B cell (primary cell): ENCODE measurements at regions of chr2 and their contacts with region 1.

Region 1: GRCh38 chr2:174487108-174487819 is 435 bp upstream of the GPR155 start:
- DNase-seq: peak; percentile 95
- ATAC-seq: peak; percentile 93
- H3K4me3 ChIP-seq: peak overlapping the region; percentile 81 to 90 (median 87)
- H3K4me3 Mint-ChIP-seq: peak overlapping the region; percentile 98
- H3K27ac ChIP-seq: peak overlapping the region; percentile 74 to 75
- H3K27ac Mint-ChIP-seq: peak overlapping the region; percentile 88
- H3K4me1 ChIP-seq: peaks cover 17 to 27% of the 10 kb centered on the region in 2 donors
- H3K4me1 Mint-ChIP-seq: peaks cover 44% of the 10 kb centered on the region
- H3K27me3 ChIP-seq: no peaks in the 10 kb centered on the region
- H3K27me3 Mint-ChIP-seq: no peaks in the 10 kb centered on the region
- CTCF ChIP-seq: no peak

Region 2: DNA sequence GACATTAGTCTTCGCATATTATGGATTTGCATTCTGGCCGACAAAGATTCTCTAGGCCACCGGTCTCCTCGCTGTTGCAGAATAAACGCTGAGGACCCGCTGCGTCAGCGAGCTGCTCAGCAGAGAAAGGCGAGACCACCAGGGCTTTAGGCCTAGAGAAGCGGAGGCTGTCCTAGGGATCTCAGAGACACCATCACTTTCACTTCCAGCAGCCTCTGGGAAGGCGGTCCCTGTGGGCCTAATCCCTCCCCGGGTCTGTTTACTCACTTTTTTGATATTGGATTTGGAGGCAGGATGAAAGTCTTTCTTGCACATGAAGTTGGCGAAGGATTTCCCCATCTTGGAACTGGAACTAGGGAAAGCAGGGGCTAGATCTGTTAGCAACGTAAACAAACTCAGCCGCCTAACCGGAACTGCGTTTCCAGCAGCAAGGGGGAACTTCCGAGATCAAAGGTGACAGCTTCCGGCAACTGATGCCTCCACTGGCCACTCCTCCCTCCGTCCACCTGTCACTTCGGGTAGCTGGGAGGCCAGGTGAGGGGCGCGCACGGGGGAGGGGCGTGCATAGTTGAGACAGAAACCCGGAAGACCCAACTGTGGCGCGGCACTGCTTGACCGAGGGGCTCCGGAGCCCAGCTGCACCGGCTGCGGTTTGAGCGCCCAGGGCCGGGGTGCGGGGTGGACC is 91.8 kb before region 1 on chr2 and contains the start of gene SCRN3:
- CTCF ChIA-PET with region 1: no interaction called
- POLR2A ChIA-PET with region 1: interaction called, 6 read pairs
- intact Hi-C with region 1: loop called (anchors 2 kb)
- DNase-seq: peak; percentile 87
- ATAC-seq: peak; percentile 94
- H3K4me3 ChIP-seq: peak within 1 kb of the TSS; percentile 81 to 97 (median 90)
- H3K4me3 Mint-ChIP-seq: peak within 1 kb of the TSS; percentile 99
- H3K27ac ChIP-seq: peak within 1 kb of the TSS; percentile 88 to 94
- H3K27ac Mint-ChIP-seq: peak within 1 kb of the TSS; percentile 99
- H3K4me1 ChIP-seq: peaks cover 14 to 24% of the 10 kb centered on the region in 2 donors
- H3K4me1 Mint-ChIP-seq: peaks cover 39% of the 10 kb centered on the region
- H3K27me3 ChIP-seq: no peaks in the 10 kb centered on the region
- H3K27me3 Mint-ChIP-seq: no peaks in the 10 kb centered on the region
- CTCF ChIP-seq: no peak
- total RNA-seq, gene SCRN3: 16.9 and 21.6 TPM in 2 replicates

Region 3: DNA sequence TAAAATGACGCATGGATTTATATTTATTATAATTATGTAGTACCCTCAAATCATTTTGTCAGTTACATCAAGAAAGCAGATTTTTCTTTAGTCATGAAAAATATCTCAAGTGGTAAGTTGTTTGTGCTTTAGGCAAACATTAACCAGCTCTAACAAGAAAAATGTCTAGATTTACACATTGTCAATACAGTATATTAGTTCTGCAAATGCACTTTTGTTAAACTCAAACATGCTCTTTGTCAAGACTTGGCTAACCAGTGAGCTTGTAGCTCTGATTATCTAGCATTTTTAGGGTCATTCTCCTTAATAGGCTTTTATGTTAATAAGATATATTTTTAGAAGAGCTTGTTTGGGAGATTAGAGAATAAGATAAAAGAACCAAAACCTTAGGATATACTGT is 59.0 kb before region 1 on chr2:
- CTCF ChIA-PET with region 1: no interaction called
- POLR2A ChIA-PET with region 1: no interaction called
- intact Hi-C with region 1: no loop called
- DNase-seq: no peak
- ATAC-seq: no peak
- H3K4me3 ChIP-seq: no peak overlapping the region
- H3K4me3 Mint-ChIP-seq: no peak overlapping the region
- H3K27ac ChIP-seq: no peak overlapping the region
- H3K27ac Mint-ChIP-seq: no peak overlapping the region
- H3K4me1 ChIP-seq: no peaks in the 10 kb centered on the region
- H3K4me1 Mint-ChIP-seq: no peaks in the 10 kb centered on the region
- H3K27me3 ChIP-seq: no peaks in the 10 kb centered on the region
- H3K27me3 Mint-ChIP-seq: no peaks in the 10 kb centered on the region
- CTCF ChIP-seq: no peak

Region 4: GRCh38 chr2:174593574-174594203 is 106.4 kb after region 1 on chr2:
- CTCF ChIA-PET with region 1: no interaction called
- POLR2A ChIA-PET with region 1: interaction called, 3 read pairs
- intact Hi-C with region 1: loop called (anchors 1 kb)
- DNase-seq: peak; percentile 88
- ATAC-seq: peak; percentile 66
- H3K4me3 ChIP-seq: peak overlapping the region; percentile 53 to 92 (median 71)
- H3K4me3 Mint-ChIP-seq: peak overlapping the region; percentile 93
- H3K27ac ChIP-seq: peak overlapping the region; percentile 93 to 98
- H3K27ac Mint-ChIP-seq: peak overlapping the region; percentile 96
- H3K4me1 ChIP-seq: peaks cover 63 to 65% of the 10 kb centered on the region in 2 donors
- H3K4me1 Mint-ChIP-seq: peaks cover 65% of the 10 kb centered on the region
- H3K27me3 ChIP-seq: no peaks in the 10 kb centered on the region
- H3K27me3 Mint-ChIP-seq: no peaks in the 10 kb centered on the region
- CTCF ChIP-seq: no peak

Region 5: GRCh38 chr2:174603280-174603679 is 116.0 kb after region 1 on chr2:
- CTCF ChIA-PET with region 1: interaction called, 11 read pairs
- POLR2A ChIA-PET with region 1: no interaction called
- intact Hi-C with region 1: no loop called
- DNase-seq: peak; percentile 69
- ATAC-seq: no peak
- H3K4me3 ChIP-seq: no peak overlapping the region
- H3K4me3 Mint-ChIP-seq: no peak overlapping the region
- H3K27ac ChIP-seq: peak overlapping the region in 1 of 2 donors; percentile 8
- H3K27ac Mint-ChIP-seq: peak overlapping the region; percentile 71
- H3K4me1 ChIP-seq: peaks cover 69 to 74% of the 10 kb centered on the region in 2 donors
- H3K4me1 Mint-ChIP-seq: peaks cover 86% of the 10 kb centered on the region
- H3K27me3 ChIP-seq: no peaks in the 10 kb centered on the region
- H3K27me3 Mint-ChIP-seq: no peaks in the 10 kb centered on the region
- CTCF ChIP-seq: peak; percentile 71